ENCODE measurements at regions of chr21 and their contacts with region 1.

Region 1: GRCh38 chr21:38787461-38788274 is 18.1 kb upstream of the ETS2 start:
- DNase-seq: no peak
- ATAC-seq: peak; percentile 97
- H3K4me3 ChIP-seq: peak overlapping the region; percentile 9 to 51
- H3K27ac ChIP-seq: peak overlapping the region; percentile 99
- H3K4me1 ChIP-seq: peaks cover 31% of the 10 kb centered on the region
- H3K27me3 ChIP-seq: no peaks in the 10 kb centered on the region
- CTCF ChIP-seq: no peak

Region 2: DNA sequence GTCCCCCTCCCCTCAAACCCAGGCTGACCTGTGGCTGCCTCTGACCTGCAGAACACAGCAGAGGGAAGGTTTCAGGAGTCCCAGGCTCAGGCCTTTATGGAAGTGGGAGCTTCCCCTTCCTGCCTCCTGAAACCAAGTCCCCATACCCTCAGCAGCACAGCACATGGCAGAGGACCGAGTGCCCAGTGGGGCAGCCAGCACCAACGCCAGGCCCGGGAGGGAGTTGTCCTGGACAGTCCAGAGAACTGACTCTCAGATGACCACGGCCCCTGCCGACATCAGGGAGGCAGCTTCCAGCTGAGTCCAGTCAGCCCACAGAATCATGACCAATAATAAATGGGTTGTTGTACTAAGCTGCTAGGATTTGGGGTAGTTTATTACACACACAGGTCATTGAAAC is 209.8 kb before region 1 on chr21:
- CTCF ChIA-PET with region 1: no interaction called
- POLR2A ChIA-PET with region 1: no interaction called
- in situ Hi-C with region 1: no loop called
- intact Hi-C with region 1: no loop called
- DNase-seq: no peak
- ATAC-seq: no peak
- H3K4me3 ChIP-seq: no peak overlapping the region
- H3K27ac ChIP-seq: no peak overlapping the region
- H3K4me1 ChIP-seq: no peaks in the 10 kb centered on the region
- H3K27me3 ChIP-seq: no peaks in the 10 kb centered on the region
- CTCF ChIP-seq: no peak

Region 3: DNA sequence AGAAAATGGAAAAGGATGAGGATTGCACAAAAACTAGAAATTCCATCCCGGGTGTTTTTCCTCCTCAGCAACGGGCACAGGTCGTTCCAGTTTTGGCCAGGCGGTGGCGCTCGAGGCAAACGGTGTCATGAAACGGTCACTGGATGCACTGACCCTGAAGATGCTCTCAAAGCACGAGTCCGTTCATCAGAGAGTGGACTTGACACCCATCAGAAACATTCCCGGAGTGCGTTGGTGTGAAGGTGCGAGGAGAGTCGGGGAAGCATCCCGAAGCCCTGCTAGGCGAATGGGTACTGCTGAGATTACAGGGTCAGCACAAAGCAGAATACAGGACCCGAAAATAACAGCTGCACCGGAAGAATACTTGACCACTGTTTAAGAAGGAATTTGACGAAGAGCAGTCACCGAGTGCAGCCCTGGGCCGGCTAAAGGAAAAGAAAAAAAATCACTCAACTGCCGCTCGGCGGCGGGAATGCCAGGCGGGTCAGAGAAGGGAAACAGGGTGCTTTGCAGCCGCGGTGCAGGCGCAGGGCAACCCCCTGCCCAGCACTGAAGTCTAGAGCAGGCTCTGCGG is 53.6 kb before region 1 on chr21:
- CTCF ChIA-PET with region 1: no interaction called
- POLR2A ChIA-PET with region 1: no interaction called
- in situ Hi-C with region 1: no loop called
- intact Hi-C with region 1: loop called (anchors 5 kb)
- DNase-seq: peak; percentile 85
- ATAC-seq: peak; percentile 96
- H3K4me3 ChIP-seq: peak overlapping the region; percentile 26 to 65
- H3K27ac ChIP-seq: peak overlapping the region; percentile 95
- H3K4me1 ChIP-seq: peaks cover 9% of the 10 kb centered on the region
- H3K27me3 ChIP-seq: no peaks in the 10 kb centered on the region
- CTCF ChIP-seq: peak; percentile 89

Region 4: GRCh38 chr21:38798481-38798882 is 10.8 kb after region 1 on chr21:
- CTCF ChIA-PET with region 1: no interaction called
- POLR2A ChIA-PET with region 1: interaction called, 19 read pairs
- in situ Hi-C with region 1: no loop called
- intact Hi-C with region 1: no loop called
- DNase-seq: no peak
- ATAC-seq: peak; percentile 77
- H3K4me3 ChIP-seq: peak overlapping the region in 1 of 2 experiments; percentile 35; a peak in 2 of 4 replicates
- H3K27ac ChIP-seq: peak overlapping the region; percentile 99
- H3K4me1 ChIP-seq: peaks cover 78% of the 10 kb centered on the region
- H3K27me3 ChIP-seq: no peaks in the 10 kb centered on the region
- CTCF ChIP-seq: no peak

Measured in Panc1 (cell line).